ENCODE measurements at regions of chr3 and their contacts with region 1.

Region 1: DNA sequence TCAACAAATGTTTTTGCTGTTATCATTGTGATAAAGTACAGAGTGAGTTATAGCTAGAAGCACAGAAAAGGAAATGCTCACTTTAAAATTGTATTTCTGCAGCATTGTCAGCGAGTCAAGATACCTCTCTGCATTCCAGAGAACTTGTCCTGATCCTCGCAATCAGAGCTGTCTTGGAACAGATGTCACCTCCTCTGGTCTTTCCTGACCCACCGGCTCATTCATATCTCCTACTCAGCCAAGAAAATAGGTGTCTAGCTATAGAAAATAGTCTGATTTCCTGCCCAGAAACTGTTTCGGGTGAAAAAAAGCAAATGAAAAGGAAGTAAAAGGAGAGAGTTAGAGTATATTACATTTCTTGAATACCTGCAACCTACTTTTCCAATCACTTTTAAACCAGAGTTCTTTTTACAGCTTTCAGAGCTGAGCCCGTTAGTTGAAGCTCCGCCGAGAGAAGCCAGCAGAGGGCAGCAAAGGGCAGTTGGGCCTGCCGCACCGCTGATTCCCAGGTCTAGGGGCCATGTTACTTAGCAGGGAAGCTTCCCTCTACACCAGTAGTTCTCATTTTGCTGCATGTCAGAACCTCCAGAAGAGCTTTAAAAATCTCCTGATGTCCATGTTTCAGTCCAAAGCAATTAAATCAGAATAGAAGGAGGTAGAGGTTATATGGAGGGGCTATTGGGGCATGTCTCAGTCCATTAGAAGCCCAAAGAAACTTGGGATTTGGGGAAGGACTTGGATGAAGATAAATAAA is 185.7 kb upstream of the THRB start:
- DNase-seq: peak; percentile 29
- ATAC-seq: peak; percentile 94
- H3K4me3 ChIP-seq: no peak overlapping the region
- H3K27ac ChIP-seq: no peak overlapping the region
- H3K4me1 ChIP-seq: peaks cover 11% of the 10 kb centered on the region
- H3K27me3 ChIP-seq: no peaks in the 10 kb centered on the region; a peak in 1 of 5 replicates
- CTCF ChIP-seq: peak; percentile 77
- EP300 ChIP-seq: no peak
- POLR2A ChIP-seq: no peak
- RAD21 ChIP-seq: peak; percentile 39; the same call in 1 of the 2 replicates

Region 2: GRCh38 chr3:24004171-24004938 is 676.0 kb before region 1 on chr3:
- CTCF ChIA-PET with region 1: interaction called, 13 read pairs
- POLR2A ChIA-PET with region 1: no interaction called
- in situ Hi-C with region 1: loop called (anchors 25 kb)
- intact Hi-C with region 1: loop called (anchors 1 kb)
- DNase-seq: no peak
- ATAC-seq: no peak
- H3K4me3 ChIP-seq: no peak overlapping the region
- H3K27ac ChIP-seq: no peak overlapping the region
- H3K4me1 ChIP-seq: no peaks in the 10 kb centered on the region
- H3K27me3 ChIP-seq: peaks cover 0 to 10% of the 10 kb centered on the region in 2 experiments; a peak in 2 of 5 replicates
- CTCF ChIP-seq: no peak
- EP300 ChIP-seq: no peak
- POLR2A ChIP-seq: no peak
- RAD21 ChIP-seq: no peak

Region 3: DNA sequence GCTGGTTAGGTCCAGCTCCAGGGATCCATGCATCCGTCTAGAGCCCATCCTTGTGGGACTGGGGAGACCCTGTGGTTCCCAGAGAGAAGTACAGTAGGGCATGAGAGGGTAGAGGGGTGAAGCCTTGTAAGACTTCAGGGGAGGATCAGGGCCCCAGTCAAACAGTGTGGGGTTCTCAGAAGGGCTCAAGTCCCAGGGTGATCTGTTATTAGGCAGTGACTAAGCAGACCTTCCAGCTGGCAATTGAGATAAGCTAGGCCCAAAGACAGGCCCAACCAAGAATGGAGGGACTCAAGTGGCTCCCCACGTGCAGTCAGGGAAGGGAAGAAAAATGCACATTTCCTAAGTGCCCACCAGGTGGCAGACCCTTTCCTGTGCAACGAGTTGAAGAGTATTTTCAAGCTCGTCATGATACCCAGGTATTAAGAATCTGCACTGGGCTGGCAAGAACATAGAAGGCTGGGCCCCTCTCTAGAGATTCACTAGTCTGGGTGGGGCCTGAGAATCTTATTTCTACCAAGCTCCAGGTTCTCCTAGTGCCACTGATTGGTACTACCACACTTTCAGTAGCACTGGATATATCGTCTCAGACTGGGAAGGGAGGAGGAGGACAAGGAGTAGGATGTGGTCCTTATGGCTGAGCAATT is 494.5 kb before region 1 on chr3:
- CTCF ChIA-PET with region 1: no interaction called
- POLR2A ChIA-PET with region 1: no interaction called
- in situ Hi-C with region 1: no loop called
- intact Hi-C with region 1: loop called (anchors 1 kb)
- DNase-seq: peak; percentile 26
- ATAC-seq: peak; percentile 88
- H3K4me3 ChIP-seq: no peak overlapping the region
- H3K27ac ChIP-seq: no peak overlapping the region
- H3K4me1 ChIP-seq: no peaks in the 10 kb centered on the region
- H3K27me3 ChIP-seq: no peaks in the 10 kb centered on the region
- CTCF ChIP-seq: peak; percentile 73
- EP300 ChIP-seq: no peak
- POLR2A ChIP-seq: no peak
- RAD21 ChIP-seq: 0 out of 2 replicates have a peak, but pooled peaks have one; percentile 39

Region 4: GRCh38 chr3:24521420-24522145 is 158.8 kb before region 1 on chr3:
- CTCF ChIA-PET with region 1: no interaction called
- POLR2A ChIA-PET with region 1: no interaction called
- in situ Hi-C with region 1: no loop called
- intact Hi-C with region 1: loop called (anchors 5 kb)
- DNase-seq: peak; percentile 36
- ATAC-seq: peak; percentile 72
- H3K4me3 ChIP-seq: peak overlapping the region; percentile 82 to 93 (median 85)
- H3K27ac ChIP-seq: peak overlapping the region; percentile 92
- H3K4me1 ChIP-seq: peaks cover 65% of the 10 kb centered on the region
- H3K27me3 ChIP-seq: no peaks in the 10 kb centered on the region; a peak in 1 of 5 replicates
- CTCF ChIP-seq: peak; percentile 34
- EP300 ChIP-seq: no peak
- POLR2A ChIP-seq: peak in 1 of 2 experiments; percentile 30
- RAD21 ChIP-seq: peak; percentile 62